ENCODE measurements at regions of chr4 and their contacts with region 1.

Region 1: DNA sequence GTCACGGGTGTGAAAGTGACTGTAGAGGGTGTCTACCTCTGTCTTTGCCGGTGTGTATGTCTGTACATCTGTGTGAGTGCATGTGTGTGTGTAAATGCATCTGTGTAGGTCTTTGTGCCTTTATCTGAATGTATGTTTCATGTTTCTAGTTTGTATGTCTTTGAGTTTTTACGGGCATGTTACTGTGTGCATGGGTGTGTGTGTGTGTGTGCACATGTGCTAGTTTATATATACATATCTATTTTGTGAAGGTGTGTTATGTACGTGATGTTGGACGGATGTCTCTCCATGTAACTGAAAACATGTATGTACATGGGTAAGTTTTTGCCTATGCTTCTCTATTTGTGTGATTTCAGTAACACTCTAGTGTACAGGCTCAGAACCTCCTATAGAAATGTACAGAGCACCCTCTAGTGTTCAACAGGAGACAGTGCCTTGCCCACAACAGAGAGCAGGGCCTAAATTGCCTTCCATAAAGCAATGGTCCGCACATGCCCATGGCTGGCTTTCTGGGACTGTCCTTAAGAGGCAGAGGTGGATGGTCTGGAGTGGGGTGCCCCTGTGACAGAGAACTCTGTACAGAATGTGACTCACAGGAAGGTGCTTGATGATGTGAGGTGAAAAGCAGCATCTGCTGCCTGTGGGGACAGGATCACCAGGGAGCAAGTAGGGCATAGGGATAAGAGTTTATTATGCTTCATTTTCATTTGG is 343.5 kb downstream of the RAPGEF2 start:
- DNase-seq: no peak
- ATAC-seq: peak; percentile 52
- H3K4me3 Mint-ChIP-seq: no peak overlapping the region
- H3K27ac Mint-ChIP-seq: no peak overlapping the region
- H3K4me1 Mint-ChIP-seq: no peaks in the 10 kb centered on the region
- H3K27me3 Mint-ChIP-seq: peaks cover 12% of the 10 kb centered on the region
- CTCF ChIP-seq: peak; percentile 17

Region 2: DNA sequence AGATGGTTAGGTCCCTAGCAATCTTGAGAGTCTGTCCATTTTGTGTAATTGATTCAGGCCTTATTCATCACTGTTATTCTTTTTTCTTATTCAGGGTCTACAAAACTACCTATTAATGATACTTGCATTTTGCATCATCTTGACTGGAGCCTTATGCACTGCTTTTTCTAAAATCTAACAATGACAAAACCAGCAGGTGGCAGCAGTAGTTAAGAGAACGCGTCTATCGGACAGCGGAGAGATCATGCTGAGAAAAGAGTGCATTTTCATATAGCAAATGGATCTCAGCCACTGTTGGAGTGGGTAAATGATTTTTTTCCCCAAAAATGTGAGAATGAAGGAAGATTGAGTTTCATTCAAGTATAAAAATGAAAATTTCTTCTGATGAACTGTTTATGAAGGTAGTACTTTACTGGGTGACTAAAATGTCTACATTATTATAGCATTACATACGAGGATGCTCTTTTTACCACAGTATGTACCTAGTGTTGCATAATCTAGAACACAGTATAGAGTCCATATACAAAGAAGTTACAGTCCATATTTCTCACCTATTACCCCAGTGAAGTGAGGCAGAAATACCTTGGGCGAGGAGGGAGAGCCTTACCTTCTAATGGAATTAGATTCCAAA is 1193.0 kb before region 1 on chr4:
- CTCF ChIA-PET with region 1: no interaction called
- POLR2A ChIA-PET with region 1: no interaction called
- intact Hi-C with region 1: loop called (anchors 1 kb)
- DNase-seq: no peak
- ATAC-seq: peak; percentile 42
- H3K4me3 Mint-ChIP-seq: no peak overlapping the region
- H3K27ac Mint-ChIP-seq: no peak overlapping the region
- H3K4me1 Mint-ChIP-seq: peaks cover 5% of the 10 kb centered on the region
- H3K27me3 Mint-ChIP-seq: peaks cover 12% of the 10 kb centered on the region
- CTCF ChIP-seq: no peak

Region 3: DNA sequence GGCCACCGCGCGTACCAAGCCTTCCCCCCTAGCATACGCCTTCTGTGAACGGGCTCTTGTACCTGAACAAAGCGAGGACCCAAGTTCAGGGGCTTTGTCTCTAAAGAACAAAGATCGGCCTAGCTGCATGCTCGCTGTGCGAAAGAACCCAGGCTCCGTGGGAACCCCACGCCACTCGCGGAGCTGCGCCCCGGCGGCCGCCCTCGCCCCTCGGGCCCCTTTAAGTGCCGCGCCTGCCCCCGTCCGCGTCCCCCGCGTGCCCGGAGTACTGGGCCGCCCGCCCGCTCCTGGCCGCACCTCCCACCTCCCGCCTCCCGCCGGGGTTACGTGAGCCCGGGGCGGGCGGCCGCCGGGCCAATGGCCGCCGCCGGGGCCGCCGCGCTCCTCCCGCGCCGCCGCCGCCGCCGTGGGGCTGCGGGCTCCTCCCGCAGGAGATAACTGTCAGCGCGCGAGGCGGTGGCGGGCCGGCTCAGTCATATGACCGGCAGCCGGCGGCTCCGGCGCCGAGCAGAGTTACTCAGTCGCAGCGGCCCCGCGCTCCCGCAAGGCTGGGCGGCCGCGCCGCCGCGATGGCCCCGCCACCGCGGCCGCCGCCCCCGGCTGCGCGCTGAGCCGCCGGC is 677.8 kb before region 1 on chr4 and contains the start of gene FNIP2:
- CTCF ChIA-PET with region 1: no interaction called
- POLR2A ChIA-PET with region 1: no interaction called
- intact Hi-C with region 1: no loop called
- DNase-seq: peak; percentile 41
- ATAC-seq: peak; percentile 79
- H3K4me3 Mint-ChIP-seq: peak within 1 kb of the TSS; percentile 84
- H3K27ac Mint-ChIP-seq: no peak within 1 kb of the TSS
- H3K4me1 Mint-ChIP-seq: peaks cover 8% of the 10 kb centered on the region
- H3K27me3 Mint-ChIP-seq: peaks cover 72% of the 10 kb centered on the region
- CTCF ChIP-seq: no peak
- total RNA-seq, gene FNIP2: 0.22 TPM in 1 of 2 replicates, not detected in the other

Region 4: GRCh38 chr4:159290321-159291030 is 155.9 kb before region 1 on chr4:
- CTCF ChIA-PET with region 1: no interaction called
- POLR2A ChIA-PET with region 1: no interaction called
- intact Hi-C with region 1: no loop called
- DNase-seq: no peak
- ATAC-seq: no peak
- H3K4me3 Mint-ChIP-seq: no peak overlapping the region
- H3K27ac Mint-ChIP-seq: no peak overlapping the region
- H3K4me1 Mint-ChIP-seq: no peaks in the 10 kb centered on the region
- H3K27me3 Mint-ChIP-seq: no peaks in the 10 kb centered on the region
- CTCF ChIP-seq: no peak

Region 5: GRCh38 chr4:159384632-159385031 is 61.8 kb before region 1 on chr4:
- CTCF ChIA-PET with region 1: no interaction called
- POLR2A ChIA-PET with region 1: no interaction called
- intact Hi-C with region 1: no loop called
- DNase-seq: no peak
- ATAC-seq: no peak
- H3K4me3 Mint-ChIP-seq: no peak overlapping the region
- H3K27ac Mint-ChIP-seq: no peak overlapping the region
- H3K4me1 Mint-ChIP-seq: no peaks in the 10 kb centered on the region
- H3K27me3 Mint-ChIP-seq: peaks cover 3% of the 10 kb centered on the region
- CTCF ChIP-seq: no peak

Measured in activated B cell treated with CpG ODN at 0.5 μM for 24 hours (primary cell).